ENCODE measurements at regions of chr18 and their contacts with region 1.

Region 1: GRCh38 chr18:37964885-37965571 is 399.4 kb upstream of the CELF4 start:
- DNase-seq: no peak
- H3K4me3 ChIP-seq: no peak overlapping the region
- CTCF ChIP-seq: no peak

Region 2: DNA sequence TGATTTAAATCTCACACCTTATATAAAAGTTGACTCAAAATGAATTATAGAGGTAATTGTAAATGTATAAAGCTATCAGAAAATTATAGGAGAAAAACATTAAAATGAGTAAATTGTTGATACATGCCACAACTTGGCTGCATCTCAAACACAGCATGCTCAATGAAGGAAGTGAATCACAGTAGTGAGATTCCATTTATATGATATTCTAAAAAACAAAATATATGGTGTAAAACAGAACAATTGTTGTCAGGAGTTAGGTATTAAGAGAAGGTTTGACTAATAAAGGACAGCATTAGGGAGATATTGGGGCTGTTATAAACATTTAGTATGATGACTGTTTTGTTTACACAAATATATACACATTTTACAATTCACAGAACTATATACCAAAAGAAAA is 42.9 kb before region 1 on chr18:
- in situ Hi-C with region 1: no loop called
- DNase-seq: no peak
- H3K4me3 ChIP-seq: no peak overlapping the region
- CTCF ChIP-seq: no peak

Region 3: GRCh38 chr18:38007676-38008330 is 42.8 kb after region 1 on chr18:
- in situ Hi-C with region 1: loop called (anchors 5 kb)
- DNase-seq: no peak
- H3K4me3 ChIP-seq: no peak overlapping the region
- CTCF ChIP-seq: no peak